ENCODE measurements at regions of chr3 and their contacts with region 1.

Region 1: DNA sequence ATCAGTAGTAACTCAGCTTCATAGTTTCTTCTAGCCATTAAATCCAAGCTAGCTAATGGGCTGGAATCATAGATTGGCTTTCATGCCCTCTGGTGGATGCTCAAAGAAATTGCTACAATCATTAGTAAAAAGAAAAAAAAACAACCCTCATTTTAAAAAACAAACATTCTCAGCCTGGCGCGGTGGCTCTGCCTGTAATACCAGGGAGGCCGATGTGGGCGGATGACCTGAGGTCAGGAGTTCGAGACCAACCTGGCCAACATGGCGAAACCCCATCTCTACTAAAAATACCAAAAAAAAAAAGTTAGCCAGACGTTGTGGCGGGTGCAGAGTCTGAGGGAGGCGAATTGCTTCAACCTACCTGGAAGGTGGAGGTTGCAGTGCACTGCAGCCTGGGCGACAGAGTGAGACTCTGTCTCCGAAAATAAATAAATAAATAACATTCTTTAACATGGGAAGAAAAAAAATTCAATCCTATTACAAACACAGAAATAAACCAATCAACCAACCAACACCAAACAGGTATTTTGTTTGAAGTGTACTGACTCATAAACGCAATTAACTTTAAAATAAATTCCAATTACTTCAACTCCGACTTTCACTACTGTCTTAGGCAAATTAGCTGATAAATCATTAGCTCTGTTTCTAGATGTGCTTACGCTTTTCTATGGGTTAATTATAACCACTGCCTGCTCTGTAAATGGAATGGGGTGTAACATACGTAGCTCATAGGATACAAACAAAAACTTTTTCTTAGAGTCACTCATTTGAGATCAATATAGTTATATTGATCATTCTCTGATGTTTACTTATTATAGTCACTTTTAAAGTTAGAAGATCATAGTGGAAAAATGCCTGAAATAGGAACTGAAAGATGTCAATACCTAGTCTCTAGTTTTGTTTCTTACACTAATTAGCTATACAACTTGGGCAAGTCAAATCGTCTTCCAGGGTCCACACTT is 24.9 kb downstream of the TMEM207 start:
- DNase-seq: peak; percentile 77
- ATAC-seq: peak; percentile 96
- H3K4me3 ChIP-seq: no peak overlapping the region
- H3K27ac ChIP-seq: no peak overlapping the region
- H3K4me1 ChIP-seq: no peaks in the 10 kb centered on the region
- H3K27me3 ChIP-seq: no peaks in the 10 kb centered on the region
- CTCF ChIP-seq: peak; percentile 68
- EP300 ChIP-seq: peak in 1 of 2 experiments; percentile 27; a peak in 1 of 4 replicates
- POLR2A ChIP-seq: no peak
- RAD21 ChIP-seq: peak; percentile 59

Region 2: GRCh38 chr3:190205739-190206138 is 219.0 kb before region 1 on chr3:
- CTCF ChIA-PET with region 1: no interaction called
- POLR2A ChIA-PET with region 1: no interaction called
- in situ Hi-C with region 1: no loop called
- intact Hi-C with region 1: no loop called
- DNase-seq: no peak
- ATAC-seq: no peak
- H3K4me3 ChIP-seq: no peak overlapping the region
- H3K27ac ChIP-seq: no peak overlapping the region
- H3K4me1 ChIP-seq: no peaks in the 10 kb centered on the region
- H3K27me3 ChIP-seq: no peaks in the 10 kb centered on the region; a peak in 1 of 5 replicates
- CTCF ChIP-seq: no peak
- EP300 ChIP-seq: no peak
- POLR2A ChIP-seq: no peak
- RAD21 ChIP-seq: no peak

Region 3: GRCh38 chr3:190224863-190225692 is 199.7 kb before region 1 on chr3:
- CTCF ChIA-PET with region 1: interaction called, 10 read pairs
- POLR2A ChIA-PET with region 1: no interaction called
- in situ Hi-C with region 1: no loop called
- intact Hi-C with region 1: loop called (anchors 1 kb)
- DNase-seq: peak; percentile 29
- ATAC-seq: peak; percentile 70
- H3K4me3 ChIP-seq: no peak overlapping the region
- H3K27ac ChIP-seq: no peak overlapping the region
- H3K4me1 ChIP-seq: no peaks in the 10 kb centered on the region
- H3K27me3 ChIP-seq: peaks cover 0 to 4% of the 10 kb centered on the region in 2 experiments; a peak in 1 of 5 replicates
- CTCF ChIP-seq: peak; percentile 60
- EP300 ChIP-seq: no peak
- POLR2A ChIP-seq: no peak
- RAD21 ChIP-seq: peak; percentile 29; the same call in 1 of the 2 replicates